Vagina (tissue), 2 donors: ENCODE measurements at regions of chr6 and their contacts with region 1.

Region 1: GRCh38 chr6:138109042-138109997 is 2.1 kb upstream of the PERP start:
- DNase-seq: no peak
- H3K4me3 ChIP-seq: no peak overlapping the region
- H3K27ac ChIP-seq: peak overlapping the region; percentile 96
- H3K4me1 ChIP-seq: peaks cover 12% of the 10 kb centered on the region
- H3K27me3 ChIP-seq: no peaks in the 10 kb centered on the region
- CTCF ChIP-seq: peak; percentile 77 to 94 (median 85)
- POLR2A ChIP-seq: no peak

Region 2: DNA sequence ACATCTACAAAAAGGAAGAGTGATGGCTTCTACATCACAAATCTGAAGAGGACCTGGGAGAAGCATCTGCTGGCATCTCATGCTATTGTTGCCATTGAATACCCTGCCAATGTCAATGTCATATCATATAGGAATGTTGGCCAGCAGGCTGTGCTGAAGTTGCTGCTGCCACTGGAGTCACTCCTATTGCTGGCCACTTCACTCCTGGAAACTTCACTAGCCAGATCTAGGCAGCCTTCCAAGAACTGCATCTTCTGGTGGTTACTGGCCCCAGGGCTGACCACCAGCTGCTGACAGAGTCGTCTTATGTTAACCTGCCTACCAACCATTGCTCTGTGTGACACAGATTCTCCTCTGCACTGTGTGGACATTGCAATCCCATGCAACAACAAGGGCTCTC is 113.9 kb before region 1 on chr6:
- intact Hi-C with region 1: loop called (anchors 5 kb)
- DNase-seq: no peak
- H3K4me3 ChIP-seq: no peak overlapping the region
- H3K27ac ChIP-seq: no peak overlapping the region
- H3K4me1 ChIP-seq: no peaks in the 10 kb centered on the region
- H3K27me3 ChIP-seq: no peaks in the 10 kb centered on the region
- CTCF ChIP-seq: no peak
- POLR2A ChIP-seq: no peak

Region 3: GRCh38 chr6:138086573-138087196 is 22.6 kb before region 1 on chr6:
- intact Hi-C with region 1: no loop called
- DNase-seq: no peak
- H3K4me3 ChIP-seq: no peak overlapping the region
- H3K27ac ChIP-seq: peak overlapping the region; percentile 48
- H3K4me1 ChIP-seq: peaks cover 42% of the 10 kb centered on the region
- H3K27me3 ChIP-seq: no peaks in the 10 kb centered on the region
- CTCF ChIP-seq: no peak
- POLR2A ChIP-seq: no peak